ENCODE measurements at regions of chr7 and their contacts with region 1.

Region 1: DNA sequence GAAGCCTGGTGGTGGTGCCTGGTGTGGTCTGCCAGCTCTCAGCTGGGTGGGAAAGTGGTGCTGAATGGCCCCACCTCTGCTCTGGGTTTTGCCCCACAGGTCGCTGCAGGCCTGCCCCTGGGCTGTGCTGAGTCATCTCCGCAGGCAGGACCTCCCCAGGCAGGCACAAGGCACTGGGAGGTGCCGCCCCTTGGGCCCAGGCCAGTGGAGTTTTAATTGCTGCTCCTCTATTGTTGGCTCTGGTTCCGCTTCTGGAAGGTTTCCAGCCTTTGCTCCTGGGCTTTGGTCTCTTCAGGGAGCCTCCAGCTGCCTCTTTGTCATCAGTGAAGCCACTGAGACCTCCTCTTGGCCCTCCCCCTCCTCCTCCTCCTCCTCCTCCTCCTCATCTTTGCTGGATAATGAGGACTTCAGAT is 180.3 kb upstream of the GRB10 start:
- DNase-seq: peak; percentile 74
- ATAC-seq: peak; percentile 70

Region 2: DNA sequence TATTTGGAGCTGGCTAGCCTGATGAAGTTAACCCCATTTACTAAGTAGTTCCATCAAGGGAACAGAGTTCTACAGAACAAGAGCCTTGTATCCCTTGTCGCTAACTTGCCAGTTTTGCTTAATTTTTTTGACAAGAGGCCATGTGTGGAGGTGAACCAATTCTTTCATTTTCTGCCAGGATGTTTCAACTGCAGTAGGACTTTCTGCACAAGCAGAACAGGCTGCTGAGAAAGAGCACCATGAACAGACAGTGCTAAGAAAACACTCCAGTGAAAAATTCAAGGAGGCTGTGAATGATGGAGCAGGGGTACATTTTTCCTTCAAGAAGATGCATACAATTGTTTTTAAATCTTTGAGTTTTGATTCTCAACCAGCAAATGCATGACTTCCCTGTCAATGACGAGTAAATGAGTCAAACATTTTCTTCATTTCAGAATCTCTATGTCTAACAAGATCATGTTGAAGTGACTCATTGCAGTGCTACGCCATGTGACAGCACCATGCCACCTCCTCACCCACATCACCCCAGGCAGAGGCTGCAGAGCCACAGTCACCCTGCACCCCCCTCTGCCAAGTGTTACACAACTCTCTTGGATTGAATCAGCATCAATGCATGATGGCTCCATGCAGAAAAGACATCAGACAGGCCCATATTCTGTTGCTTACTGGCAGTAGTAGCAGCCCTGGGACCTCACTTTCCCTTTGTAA is 160.5 kb after region 1 on chr7:
- intact Hi-C with region 1: loop called (anchors 10 kb)
- DNase-seq: no peak
- ATAC-seq: no peak

Measured in Right ventricle myocardium inferior (tissue), 1 donor.